ENCODE measurements at regions of chr6 and their contacts with region 1.

Region 1: DNA sequence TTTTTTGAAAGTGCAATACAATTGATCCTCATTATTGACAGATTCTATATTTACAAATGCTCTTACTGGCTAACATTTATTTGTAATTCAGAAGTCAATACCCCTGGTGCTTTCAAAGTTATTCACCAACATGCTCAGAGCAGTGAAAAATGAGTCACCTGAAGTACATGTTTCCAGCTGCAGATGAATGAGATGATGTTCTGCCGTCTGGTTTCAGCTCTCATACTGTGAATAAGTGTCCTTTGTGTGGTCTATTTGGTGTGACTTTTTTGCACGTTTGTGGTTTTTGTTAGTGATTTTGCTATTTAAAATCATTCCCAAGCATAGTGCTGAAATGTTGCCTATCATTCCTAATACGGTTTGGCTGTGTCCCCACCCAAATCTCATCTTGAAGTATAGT is 22.3 kb upstream of the EYA4 start:
- DNase-seq: no peak
- ATAC-seq: no peak

Region 2: GRCh38 chr6:133170600-133170999 is 48.3 kb before region 1 on chr6:
- intact Hi-C with region 1: no loop called
- DNase-seq: no peak
- ATAC-seq: no peak

Region 3: DNA sequence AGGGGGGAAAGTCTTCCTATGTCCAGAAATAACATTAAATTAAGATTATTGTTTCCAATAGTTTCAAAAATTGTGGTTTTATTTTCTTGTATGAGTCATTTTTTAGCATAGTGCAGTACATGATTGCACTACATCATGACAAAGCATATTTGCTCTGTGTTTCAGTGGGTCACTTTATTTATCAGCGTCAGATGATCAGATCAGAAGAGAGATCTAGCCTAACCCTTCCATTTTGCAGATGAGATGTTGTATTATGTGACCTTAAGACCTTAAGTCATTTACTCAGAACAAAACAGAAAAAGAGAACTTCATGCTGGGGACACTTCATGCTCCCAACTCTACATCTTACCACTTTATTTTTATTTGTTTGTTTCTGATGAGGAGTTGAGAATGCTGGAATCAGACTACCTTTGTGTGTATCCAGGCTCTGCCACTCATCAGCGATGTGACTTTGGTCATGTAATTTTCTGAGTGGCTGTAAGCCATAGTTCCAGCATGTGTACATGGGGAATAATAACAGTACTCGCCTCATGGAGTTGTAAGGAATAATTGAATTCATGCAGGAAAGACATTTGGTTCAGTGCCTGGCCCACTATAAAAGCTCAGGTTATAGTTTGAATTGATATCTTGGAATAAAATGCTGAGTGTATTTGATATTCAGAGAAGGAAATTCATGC is 35.8 kb after region 1 on chr6:
- intact Hi-C with region 1: loop called (anchors 1 kb)
- DNase-seq: no peak
- ATAC-seq: peak; percentile 74